ENCODE measurements at regions of chr9 and their contacts with region 1.

Region 1: GRCh38 chr9:20490246-20490834 is 132.0 kb downstream of the MLLT3 start:
- DNase-seq: no peak
- H3K4me3 ChIP-seq: no peak overlapping the region
- H3K27ac ChIP-seq: no peak overlapping the region
- H3K4me1 ChIP-seq: peaks cover 0 to 5% (median 0%) of the 10 kb centered on the region in 4 donors
- H3K27me3 ChIP-seq: no peaks in the 10 kb centered on the region
- CTCF ChIP-seq: no peak

Region 2: GRCh38 chr9:20200991-20201431 is 289.3 kb before region 1 on chr9:
- intact Hi-C with region 1: loop called (anchors 5 kb)
- DNase-seq: no peak
- H3K4me3 ChIP-seq: no peak overlapping the region
- H3K27ac ChIP-seq: no peak overlapping the region
- H3K4me1 ChIP-seq: peaks cover 0 to 13% (median 0%) of the 10 kb centered on the region in 4 donors
- H3K27me3 ChIP-seq: no peaks in the 10 kb centered on the region
- CTCF ChIP-seq: no peak

Region 3: DNA sequence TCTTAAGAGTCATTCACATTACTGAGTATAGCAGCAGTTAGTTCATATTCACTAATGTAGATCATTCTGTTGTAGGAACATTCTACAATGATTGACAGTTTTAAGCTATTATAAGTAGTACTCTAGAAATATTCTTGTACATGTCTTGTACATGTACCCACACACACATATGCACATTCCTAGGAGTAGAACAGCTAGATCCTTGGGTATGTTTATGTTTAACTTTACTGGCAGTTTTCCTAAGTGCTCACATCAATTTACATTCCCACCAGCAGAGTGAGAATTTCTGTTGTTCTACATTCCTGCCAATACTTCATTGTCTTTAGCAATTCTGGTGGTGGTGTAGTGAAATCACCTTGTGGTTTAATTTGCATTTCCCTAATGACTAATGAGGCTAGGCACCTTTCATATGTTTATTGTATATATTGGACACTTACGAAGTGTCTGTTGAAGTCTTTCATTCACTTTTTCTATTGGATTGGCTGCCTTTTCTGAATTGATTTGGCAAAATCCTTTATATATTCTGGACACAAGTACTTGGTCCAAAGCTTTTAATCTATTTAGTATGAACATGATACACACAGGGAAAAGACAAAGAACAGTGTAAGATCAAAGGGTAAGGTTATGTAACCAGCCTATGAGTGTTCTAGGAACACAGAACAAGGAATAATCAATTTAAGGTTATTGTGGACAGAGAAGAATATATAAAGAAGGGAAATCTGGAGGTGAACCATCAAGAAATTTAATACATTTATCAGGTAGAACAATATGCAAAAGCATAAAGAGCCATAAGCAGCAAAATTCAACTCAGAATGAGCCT is 36.4 kb after region 1 on chr9:
- intact Hi-C with region 1: no loop called
- DNase-seq: no peak
- H3K4me3 ChIP-seq: no peak overlapping the region
- H3K27ac ChIP-seq: no peak overlapping the region
- H3K4me1 ChIP-seq: peaks cover 0 to 7% (median 0%) of the 10 kb centered on the region in 4 donors
- H3K27me3 ChIP-seq: no peaks in the 10 kb centered on the region
- CTCF ChIP-seq: no peak

Region 4: GRCh38 chr9:20640331-20641187 is 150.2 kb after region 1 on chr9:
- intact Hi-C with region 1: no loop called
- DNase-seq: no peak
- H3K4me3 ChIP-seq: no peak overlapping the region
- H3K27ac ChIP-seq: no peak overlapping the region
- H3K4me1 ChIP-seq: peaks cover 0 to 6% (median 0%) of the 10 kb centered on the region in 4 donors
- H3K27me3 ChIP-seq: no peaks in the 10 kb centered on the region
- CTCF ChIP-seq: no peak